Heart left ventricle (tissue), 16 donors: ENCODE measurements at regions of chr3 and their contacts with region 1.

Region 1: GRCh38 chr3:125072301-125072700 is 16.5 kb upstream of the HEG1 start:
- DNase-seq: peak in 1 of 5 donors; percentile 51
- ATAC-seq: peak in 1 of 4 donors; percentile 30
- H3K4me3 ChIP-seq: no peak overlapping the region
- H3K27ac ChIP-seq: no peak overlapping the region
- H3K4me1 ChIP-seq: peaks cover 0 to 13% (median 0%) of the 10 kb centered on the region in 12 donors
- H3K27me3 ChIP-seq: no peaks in the 10 kb centered on the region
- CTCF ChIP-seq: no peak
- POLR2A ChIP-seq: no peak

Region 2: DNA sequence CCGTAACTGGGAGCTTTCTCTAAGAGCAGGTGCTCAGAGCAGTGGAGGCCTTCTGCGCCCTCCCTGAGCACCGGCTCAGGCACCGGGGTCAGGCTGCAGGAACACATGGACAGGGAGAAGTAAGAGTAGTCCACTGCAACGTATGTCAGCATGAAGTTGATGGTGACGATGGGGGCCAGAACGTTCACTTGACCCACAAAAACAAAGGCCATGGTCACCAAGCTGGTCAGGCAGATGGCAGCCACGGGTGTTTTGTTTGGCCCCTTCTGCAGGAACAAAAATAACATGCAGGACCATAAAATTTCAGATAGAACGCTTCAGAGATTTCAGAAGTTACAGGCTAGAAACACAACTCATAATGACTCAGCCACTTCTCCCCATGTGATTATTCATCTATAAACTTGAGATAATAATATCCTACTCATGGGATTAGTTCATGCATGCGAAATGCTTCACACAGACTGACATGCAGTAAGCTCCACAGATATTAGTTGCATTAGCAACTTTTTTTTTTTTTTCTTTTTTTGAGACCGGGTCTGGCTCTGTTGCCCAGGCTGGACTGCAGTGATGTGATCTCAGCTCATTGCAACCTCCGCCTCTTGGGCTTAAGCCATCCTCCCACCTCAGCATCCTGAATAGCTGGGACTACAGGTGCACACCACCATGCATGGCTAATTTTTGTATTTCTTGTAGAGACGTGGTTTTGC is 35.7 kb after region 1 on chr3:
- intact Hi-C with region 1: loop called in 3 of 10 experiments (anchors 5 to 10 kb)
- DNase-seq: no peak
- ATAC-seq: peak in 1 of 4 donors; percentile 52
- H3K4me3 ChIP-seq: no peak overlapping the region
- H3K27ac ChIP-seq: no peak overlapping the region
- H3K4me1 ChIP-seq: peaks cover 0 to 9% (median 0%) of the 10 kb centered on the region in 12 donors
- H3K27me3 ChIP-seq: no peaks in the 10 kb centered on the region
- CTCF ChIP-seq: no peak
- POLR2A ChIP-seq: no peak

Region 3: DNA sequence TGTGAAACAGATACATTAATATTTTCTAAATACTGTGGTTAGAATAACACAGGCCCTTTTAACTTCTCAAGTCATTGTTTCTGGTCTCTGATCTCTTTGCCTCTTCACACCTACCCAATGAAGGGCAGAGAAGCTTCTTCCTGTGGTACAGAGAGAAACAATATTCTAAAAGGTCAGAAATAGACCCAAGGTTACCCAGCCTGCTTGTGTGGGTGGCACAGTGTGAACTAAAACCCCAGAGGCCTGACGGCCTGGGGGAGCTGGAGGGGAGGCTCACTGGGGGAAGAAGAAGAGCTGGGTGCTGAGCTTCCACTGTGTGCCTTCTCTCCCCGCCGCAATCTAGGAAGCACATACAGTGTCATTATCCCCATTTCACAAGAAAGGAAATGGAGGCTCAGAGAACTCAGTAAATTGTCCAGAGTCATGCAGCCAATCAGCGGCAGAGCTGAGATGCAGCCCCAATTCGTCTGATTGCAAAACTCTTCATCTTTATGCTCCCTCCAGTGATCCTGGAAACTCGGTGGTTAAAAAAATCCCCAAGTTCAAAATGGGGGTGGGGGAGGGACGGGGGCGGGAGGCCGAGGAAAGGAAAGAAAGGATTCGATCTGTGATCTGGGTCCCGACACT is 47.6 kb after region 1 on chr3:
- intact Hi-C with region 1: loop called in 5 of 10 experiments (anchors 5 to 10 kb)
- DNase-seq: no peak
- ATAC-seq: no peak
- H3K4me3 ChIP-seq: peak overlapping the region in 1 of 12 donors; percentile 20
- H3K27ac ChIP-seq: peak overlapping the region in 1 of 12 donors; percentile 50
- H3K4me1 ChIP-seq: peaks cover 0 to 62% (median 30%) of the 10 kb centered on the region in 12 donors
- H3K27me3 ChIP-seq: no peaks in the 10 kb centered on the region
- CTCF ChIP-seq: no peak
- POLR2A ChIP-seq: no peak

Region 4: GRCh38 chr3:125129512-125129962 is 57.2 kb after region 1 on chr3:
- intact Hi-C with region 1: loop called in 2 of 10 experiments (anchors 5 kb)
- DNase-seq: peak in 3 of 5 donors; percentile 23 to 71 (median 38)
- ATAC-seq: peak in 3 of 4 donors; percentile 68 to 80 (median 76)
- H3K4me3 ChIP-seq: no peak overlapping the region
- H3K27ac ChIP-seq: peak overlapping the region in 4 of 12 donors; percentile 38 to 75 (median 52)
- H3K4me1 ChIP-seq: peaks cover 0 to 55% (median 5%) of the 10 kb centered on the region in 12 donors
- H3K27me3 ChIP-seq: no peaks in the 10 kb centered on the region
- CTCF ChIP-seq: no peak
- POLR2A ChIP-seq: no peak

Region 5: GRCh38 chr3:125357032-125357658 is 284.8 kb after region 1 on chr3:
- intact Hi-C with region 1: no loop called
- DNase-seq: peak; percentile 45 to 76 (median 59)
- ATAC-seq: peak; percentile 63 to 94 (median 92)
- H3K4me3 ChIP-seq: peak overlapping the region; percentile 30 to 73 (median 62)
- H3K27ac ChIP-seq: peak overlapping the region; percentile 35 to 88 (median 76)
- H3K4me1 ChIP-seq: peaks cover 0 to 67% (median 37%) of the 10 kb centered on the region in 12 donors
- H3K27me3 ChIP-seq: no peaks in the 10 kb centered on the region
- CTCF ChIP-seq: no peak
- POLR2A ChIP-seq: peak in 1 of 2 donors; percentile 51